Activated CD4-positive, alpha-beta T cell treated with anti-CD3 and anti-CD28 coated beads, Interleukin-2, amount 10 ng/mL, durations not matched to agents 24 days and 14 days (primary cell): ENCODE measurements at regions of chr5 and their contacts with region 1.

Region 1: GRCh38 chr5:60699530-60700382 is at the start of gene DEPDC1B:
- DNase-seq: peak; percentile 97
- H3K4me3 Mint-ChIP-seq: peak within 1 kb of the TSS; percentile 91
- H3K27ac Mint-ChIP-seq: peak within 1 kb of the TSS; percentile 93
- H3K4me1 Mint-ChIP-seq: peaks cover 28% of the 10 kb centered on the region
- H3K27me3 Mint-ChIP-seq: peaks cover 23% of the 10 kb centered on the region
- total RNA-seq, gene DEPDC1B: 19.8 and 20.5 TPM in 2 replicates

Region 2: DNA sequence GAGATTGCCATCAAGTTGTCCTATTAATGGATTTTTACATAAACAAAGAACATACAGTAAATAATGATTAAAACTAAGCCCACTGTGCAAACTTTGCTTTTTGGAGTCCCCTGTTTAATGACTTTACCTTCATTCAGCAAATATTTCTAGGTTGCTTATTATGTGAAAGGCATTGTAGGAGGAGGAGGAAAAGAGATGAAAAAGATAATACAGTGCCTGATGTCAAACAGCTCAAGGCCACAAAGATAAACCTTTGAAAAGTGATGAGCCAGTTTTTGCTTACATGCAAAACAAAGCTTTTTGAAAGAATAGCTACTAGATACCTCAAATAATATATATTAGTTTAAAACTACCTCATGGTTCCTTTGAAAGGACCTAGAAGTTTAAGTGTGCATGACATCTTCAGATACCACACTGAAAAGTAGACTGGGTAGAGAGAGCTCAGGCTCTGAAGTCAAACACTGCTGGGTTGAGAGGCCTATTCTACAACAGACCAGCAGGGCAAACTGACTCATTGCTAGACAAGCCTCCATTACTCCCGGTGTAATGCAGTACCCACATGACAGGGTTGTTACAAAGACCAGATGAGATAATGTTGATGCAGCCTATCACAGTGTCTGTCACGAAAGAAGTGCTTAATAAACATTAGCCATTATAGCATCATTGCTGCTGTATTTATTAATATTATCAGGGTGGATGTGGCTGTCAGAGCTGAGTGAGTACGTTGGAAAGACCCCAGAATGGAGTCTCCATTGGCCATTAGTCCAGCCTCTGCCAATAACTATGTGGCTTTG is 11.6 kb before region 1 on chr5:
- intact Hi-C with region 1: no loop called
- DNase-seq: peak; percentile 56
- H3K4me3 Mint-ChIP-seq: no peak overlapping the region
- H3K27ac Mint-ChIP-seq: no peak overlapping the region
- H3K4me1 Mint-ChIP-seq: peaks cover 14% of the 10 kb centered on the region
- H3K27me3 Mint-ChIP-seq: no peaks in the 10 kb centered on the region

Region 3: DNA sequence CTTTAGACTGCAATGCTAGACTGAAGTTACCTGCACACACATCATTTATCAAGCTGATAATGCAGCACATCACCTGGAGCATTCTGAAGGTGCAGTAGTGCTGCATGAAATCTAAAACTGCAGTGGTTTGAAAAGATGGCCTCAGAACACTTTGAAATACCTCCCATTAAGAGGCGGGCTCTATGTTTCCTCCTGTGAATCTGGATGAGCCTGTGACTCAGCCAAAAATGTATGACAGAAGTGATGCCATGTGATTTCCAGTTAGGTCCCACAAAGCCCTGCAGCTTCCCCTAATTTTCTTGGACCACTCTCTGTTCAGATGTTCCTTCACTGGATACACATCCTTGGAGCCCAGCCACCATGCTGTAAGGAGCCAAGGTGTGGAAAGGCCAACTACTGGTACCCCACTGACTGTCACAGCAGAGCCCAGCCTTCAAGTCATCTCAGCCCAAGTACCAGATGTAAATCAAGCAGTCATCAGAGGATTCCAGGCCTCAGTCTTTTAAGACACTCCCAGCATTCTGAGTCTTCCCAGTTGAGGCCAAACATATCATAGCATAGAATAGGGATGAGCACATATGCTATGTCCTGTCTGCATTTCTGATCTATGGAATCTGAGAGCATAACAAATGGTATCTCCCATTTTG is 27.4 kb after region 1 on chr5:
- intact Hi-C with region 1: no loop called
- DNase-seq: no peak
- H3K4me3 Mint-ChIP-seq: no peak overlapping the region
- H3K27ac Mint-ChIP-seq: no peak overlapping the region
- H3K4me1 Mint-ChIP-seq: no peaks in the 10 kb centered on the region
- H3K27me3 Mint-ChIP-seq: peaks cover 4% of the 10 kb centered on the region

Region 4: GRCh38 chr5:60794691-60795090 is 94.9 kb after region 1 on chr5:
- intact Hi-C with region 1: no loop called
- DNase-seq: no peak
- H3K4me3 Mint-ChIP-seq: no peak overlapping the region
- H3K27ac Mint-ChIP-seq: no peak overlapping the region
- H3K4me1 Mint-ChIP-seq: no peaks in the 10 kb centered on the region
- H3K27me3 Mint-ChIP-seq: peaks cover 10% of the 10 kb centered on the region

Region 5: DNA sequence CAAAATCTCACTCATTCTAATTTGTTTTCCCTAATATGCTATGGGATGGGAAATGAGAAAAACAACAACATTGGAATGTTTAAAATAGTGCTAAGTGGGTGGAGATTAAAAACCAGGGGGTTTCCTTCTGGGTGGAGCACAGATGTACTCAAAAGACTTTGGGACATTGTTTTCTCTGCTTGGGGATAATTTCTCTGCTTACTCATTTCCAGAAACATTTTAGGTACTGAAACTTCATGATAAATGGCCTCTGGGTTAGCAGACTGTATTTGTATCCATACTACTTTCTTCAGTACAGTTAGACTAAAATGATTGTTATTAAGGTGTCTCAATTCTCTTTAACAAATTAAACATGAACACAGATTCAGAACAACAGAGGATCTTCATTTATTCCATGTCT is 126.9 kb after region 1 on chr5:
- intact Hi-C with region 1: no loop called
- DNase-seq: no peak
- H3K4me3 Mint-ChIP-seq: no peak overlapping the region
- H3K27ac Mint-ChIP-seq: no peak overlapping the region
- H3K4me1 Mint-ChIP-seq: peaks cover 22% of the 10 kb centered on the region
- H3K27me3 Mint-ChIP-seq: no peaks in the 10 kb centered on the region

Region 6: DNA sequence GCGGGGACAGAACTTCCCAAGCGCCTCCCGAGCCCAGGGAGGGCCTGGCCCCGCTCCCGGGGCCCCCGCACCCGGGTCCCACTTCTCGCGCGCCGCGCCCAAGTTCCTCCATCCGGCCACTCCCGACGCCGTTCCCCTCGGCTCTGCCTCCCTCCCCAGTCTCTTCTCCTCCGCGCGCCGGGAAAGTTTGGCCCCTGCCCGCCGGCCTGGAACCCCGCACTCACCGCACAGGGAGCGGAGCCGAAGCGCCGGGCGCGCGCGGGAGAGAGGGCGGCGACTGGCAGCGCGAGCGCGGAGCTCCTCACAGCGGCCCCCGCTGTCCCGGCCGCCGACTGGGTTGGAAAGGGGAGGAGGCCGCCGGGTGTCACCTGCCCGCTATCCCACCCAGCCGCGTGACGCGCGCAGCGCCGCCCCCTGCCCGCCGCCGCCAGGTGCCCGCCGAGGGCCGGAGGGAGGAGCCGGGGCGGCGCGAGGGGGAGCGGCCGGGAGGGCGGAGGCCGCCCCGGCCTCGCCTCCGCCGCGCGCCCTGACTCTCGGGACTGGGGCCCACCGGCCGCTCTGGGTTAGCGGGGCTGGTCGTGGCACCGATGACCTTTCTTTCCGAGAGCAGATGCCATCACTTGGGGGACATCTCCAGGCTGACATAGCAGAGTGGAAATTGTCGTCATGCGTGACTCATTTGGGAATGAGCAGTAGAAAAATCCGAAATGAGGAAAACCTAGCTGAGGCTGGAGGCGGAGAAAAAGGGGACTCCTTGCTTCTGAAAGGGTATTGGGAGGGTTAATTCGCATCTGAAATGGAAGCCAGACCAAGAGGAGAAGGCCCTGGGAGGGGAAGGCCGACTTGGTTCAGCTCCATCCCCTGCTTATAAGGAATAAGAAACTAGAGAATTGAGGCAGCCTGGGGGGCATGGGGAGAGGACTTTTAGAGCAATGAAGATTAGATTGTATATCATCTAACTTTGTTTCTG is 144.5 kb after region 1 on chr5 and contains the start of gene ELOVL7:
- intact Hi-C with region 1: loop called (anchors 2 kb)
- DNase-seq: peak; percentile 85
- H3K4me3 Mint-ChIP-seq: peak within 1 kb of the TSS; percentile 84
- H3K27ac Mint-ChIP-seq: no peak within 1 kb of the TSS
- H3K4me1 Mint-ChIP-seq: peaks cover 11% of the 10 kb centered on the region
- H3K27me3 Mint-ChIP-seq: peaks cover 54% of the 10 kb centered on the region
- total RNA-seq, gene ELOVL7: 0.56 and 1.1 TPM in 2 replicates